ENCODE measurements at regions of chr6 and their contacts with region 1.

Region 1: DNA sequence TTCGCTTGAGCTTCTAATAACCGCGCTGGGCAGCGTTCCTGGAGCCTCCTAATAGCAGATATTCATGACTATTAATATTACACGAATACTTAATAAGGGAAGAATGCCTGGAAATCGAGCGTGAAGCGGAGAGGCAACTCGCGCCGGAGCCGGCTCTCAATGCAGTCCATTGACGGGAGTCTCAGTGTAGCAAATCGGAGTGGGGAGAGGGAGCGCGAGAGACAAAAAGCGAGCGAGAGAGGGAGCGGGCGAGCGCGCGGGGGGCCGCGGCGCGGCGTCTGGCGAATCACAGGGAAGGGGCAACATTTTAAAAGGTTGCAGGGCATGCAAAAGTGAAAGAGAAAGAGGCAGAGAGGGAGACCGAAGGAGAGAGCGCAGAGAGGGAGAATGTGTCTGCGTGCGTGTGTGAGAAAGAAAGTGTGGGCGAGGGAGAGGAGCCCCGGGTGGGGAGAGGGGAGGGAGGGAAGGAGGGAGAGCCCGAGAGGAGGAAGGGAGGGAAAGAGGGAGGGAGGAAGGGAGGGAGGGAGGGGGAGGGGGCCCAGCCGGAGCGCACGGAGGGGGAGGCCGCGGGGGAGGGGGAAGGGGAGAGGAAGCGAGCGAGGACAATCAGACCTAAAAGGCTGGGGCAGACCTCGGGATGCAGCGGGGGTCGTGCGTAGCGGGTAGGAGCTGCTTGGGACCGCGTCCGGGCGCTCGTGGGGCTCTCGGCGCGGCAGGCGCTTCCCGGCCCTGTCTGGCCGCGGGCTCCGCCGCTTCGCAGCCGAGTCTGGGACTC is 2.7 kb downstream of the TFAP2A start:
- DNase-seq: peak; percentile 94
- H3K4me3 Mint-ChIP-seq: peak overlapping the region; percentile 94
- H3K27ac Mint-ChIP-seq: peak overlapping the region; percentile 99
- H3K4me1 Mint-ChIP-seq: peaks cover 12% of the 10 kb centered on the region
- H3K27me3 Mint-ChIP-seq: no peaks in the 10 kb centered on the region
- CTCF ChIP-seq: no peak

Region 2: DNA sequence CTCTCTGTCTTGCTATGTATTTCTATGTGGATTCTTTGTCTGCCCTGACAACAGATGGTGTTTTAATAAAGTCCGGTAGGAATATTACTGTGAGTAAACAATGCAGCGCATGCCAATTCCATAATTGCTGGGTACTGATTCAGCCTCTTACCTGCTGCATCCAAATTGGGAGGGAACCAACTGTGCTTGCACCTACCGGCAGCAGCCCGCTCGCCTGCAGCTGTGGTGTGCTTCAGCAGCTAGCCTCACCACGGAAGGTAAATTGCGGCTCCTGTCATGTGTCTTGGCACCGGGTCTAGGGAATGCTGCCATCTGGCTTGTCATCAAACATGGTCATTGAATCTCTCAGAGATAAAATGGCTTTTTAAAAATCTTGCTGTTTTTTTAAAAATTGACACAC is 1272.0 kb before region 1 on chr6:
- CTCF ChIA-PET with region 1: no interaction called
- POLR2A ChIA-PET with region 1: interaction called, 3 read pairs
- intact Hi-C with region 1: loop called (anchors 10 kb)
- DNase-seq: peak; percentile 74
- H3K4me3 Mint-ChIP-seq: peak overlapping the region; percentile 54
- H3K27ac Mint-ChIP-seq: peak overlapping the region; percentile 76
- H3K4me1 Mint-ChIP-seq: peaks cover 40% of the 10 kb centered on the region
- H3K27me3 Mint-ChIP-seq: no peaks in the 10 kb centered on the region
- CTCF ChIP-seq: no peak

Region 3: GRCh38 chr6:9540534-9541126 is 871.5 kb before region 1 on chr6:
- CTCF ChIA-PET with region 1: interaction called, 4 read pairs
- POLR2A ChIA-PET with region 1: interaction called, 7 read pairs
- intact Hi-C with region 1: loop called (anchors 1 kb)
- DNase-seq: peak; percentile 76
- H3K4me3 Mint-ChIP-seq: no peak overlapping the region
- H3K27ac Mint-ChIP-seq: no peak overlapping the region
- H3K4me1 Mint-ChIP-seq: no peaks in the 10 kb centered on the region
- H3K27me3 Mint-ChIP-seq: no peaks in the 10 kb centered on the region
- CTCF ChIP-seq: peak; percentile 59

Region 4: GRCh38 chr6:10082385-10082784 is 329.8 kb before region 1 on chr6:
- CTCF ChIA-PET with region 1: interaction called, 16 read pairs
- POLR2A ChIA-PET with region 1: interaction called, 103 read pairs
- intact Hi-C with region 1: loop called (anchors 1 kb)
- DNase-seq: peak; percentile 71
- H3K4me3 Mint-ChIP-seq: no peak overlapping the region
- H3K27ac Mint-ChIP-seq: peak overlapping the region; percentile 33
- H3K4me1 Mint-ChIP-seq: peaks cover 49% of the 10 kb centered on the region
- H3K27me3 Mint-ChIP-seq: no peaks in the 10 kb centered on the region
- CTCF ChIP-seq: no peak

Region 5: GRCh38 chr6:10316327-10316726 is 95.8 kb before region 1 on chr6:
- CTCF ChIA-PET with region 1: no interaction called
- POLR2A ChIA-PET with region 1: interaction called, 17 read pairs
- intact Hi-C with region 1: no loop called
- DNase-seq: peak; percentile 88
- H3K4me3 Mint-ChIP-seq: peak overlapping the region; percentile 28
- H3K27ac Mint-ChIP-seq: peak overlapping the region; percentile 86
- H3K4me1 Mint-ChIP-seq: peaks cover 14% of the 10 kb centered on the region
- H3K27me3 Mint-ChIP-seq: no peaks in the 10 kb centered on the region
- CTCF ChIP-seq: no peak

Region 6: DNA sequence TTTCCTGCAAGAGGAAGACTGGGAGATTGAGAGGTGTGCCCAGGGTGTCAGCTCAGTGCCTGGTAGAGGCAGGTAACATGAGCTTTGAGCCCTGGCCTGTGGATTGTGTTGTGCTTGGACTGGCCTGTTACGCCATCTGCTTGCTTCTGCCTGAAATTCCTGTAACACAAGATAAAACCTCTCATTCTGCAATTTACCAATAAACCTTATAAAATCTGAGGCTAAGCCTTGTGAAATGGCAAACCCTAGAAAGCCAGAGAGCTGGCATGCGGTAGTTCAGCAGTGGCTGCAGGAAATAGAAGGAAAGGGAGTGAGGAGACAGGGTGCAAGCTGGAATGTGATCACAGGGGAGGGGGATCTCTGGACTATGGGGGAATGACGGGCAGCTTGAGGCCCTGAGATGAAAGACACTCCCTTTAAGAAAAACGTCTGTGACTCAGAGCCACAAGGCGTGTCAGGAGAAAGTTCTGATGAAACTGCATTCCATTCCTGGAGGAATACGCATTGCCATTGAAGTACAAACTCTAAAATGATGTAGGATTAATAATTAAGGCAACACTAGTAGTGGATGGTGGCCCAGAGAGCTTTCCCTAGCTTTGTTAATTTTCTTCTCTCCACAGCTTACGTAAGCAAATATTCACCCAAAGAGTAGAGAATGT is 29.0 kb after region 1 on chr6:
- CTCF ChIA-PET with region 1: interaction called, 33 read pairs
- POLR2A ChIA-PET with region 1: interaction called, 763 read pairs
- intact Hi-C with region 1: no loop called
- DNase-seq: peak; percentile 98
- H3K4me3 Mint-ChIP-seq: peak overlapping the region; percentile 40
- H3K27ac Mint-ChIP-seq: peak overlapping the region; percentile 98
- H3K4me1 Mint-ChIP-seq: peaks cover 15% of the 10 kb centered on the region
- H3K27me3 Mint-ChIP-seq: no peaks in the 10 kb centered on the region
- CTCF ChIP-seq: no peak

Region 7: DNA sequence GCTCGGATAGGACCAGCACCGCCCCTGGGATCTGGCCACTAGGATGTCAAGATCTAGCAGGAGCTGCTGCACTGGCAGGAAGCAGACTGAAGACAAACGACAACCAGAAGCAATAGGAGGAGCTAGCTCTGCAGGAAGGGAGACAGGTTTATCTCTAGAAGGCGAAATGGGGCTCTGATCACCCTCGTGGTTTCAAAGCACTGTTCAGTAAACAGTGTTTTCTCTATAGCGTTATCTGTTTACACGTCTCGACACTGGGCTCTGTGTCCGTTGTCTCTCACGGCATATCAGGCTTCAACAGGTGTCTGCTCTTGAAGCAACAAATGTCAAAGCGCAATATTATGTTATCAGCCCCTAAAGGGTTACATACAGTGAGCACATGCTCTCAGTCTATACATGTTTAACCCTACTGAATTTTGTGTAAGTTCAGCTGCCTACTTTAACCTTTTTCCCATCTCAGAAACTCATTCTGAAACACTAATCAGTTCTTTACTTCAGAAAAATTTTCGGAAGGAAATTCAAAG is 359.3 kb after region 1 on chr6:
- CTCF ChIA-PET with region 1: no interaction called
- POLR2A ChIA-PET with region 1: no interaction called
- intact Hi-C with region 1: no loop called
- DNase-seq: no peak
- H3K4me3 Mint-ChIP-seq: no peak overlapping the region
- H3K27ac Mint-ChIP-seq: no peak overlapping the region
- H3K4me1 Mint-ChIP-seq: no peaks in the 10 kb centered on the region
- H3K27me3 Mint-ChIP-seq: no peaks in the 10 kb centered on the region
- CTCF ChIP-seq: no peak

Measured in MCF 10A (cell line).